Tibial artery (tissue), 4 donors: ENCODE measurements at regions of chr4 and their contacts with region 1.

Region 1: DNA sequence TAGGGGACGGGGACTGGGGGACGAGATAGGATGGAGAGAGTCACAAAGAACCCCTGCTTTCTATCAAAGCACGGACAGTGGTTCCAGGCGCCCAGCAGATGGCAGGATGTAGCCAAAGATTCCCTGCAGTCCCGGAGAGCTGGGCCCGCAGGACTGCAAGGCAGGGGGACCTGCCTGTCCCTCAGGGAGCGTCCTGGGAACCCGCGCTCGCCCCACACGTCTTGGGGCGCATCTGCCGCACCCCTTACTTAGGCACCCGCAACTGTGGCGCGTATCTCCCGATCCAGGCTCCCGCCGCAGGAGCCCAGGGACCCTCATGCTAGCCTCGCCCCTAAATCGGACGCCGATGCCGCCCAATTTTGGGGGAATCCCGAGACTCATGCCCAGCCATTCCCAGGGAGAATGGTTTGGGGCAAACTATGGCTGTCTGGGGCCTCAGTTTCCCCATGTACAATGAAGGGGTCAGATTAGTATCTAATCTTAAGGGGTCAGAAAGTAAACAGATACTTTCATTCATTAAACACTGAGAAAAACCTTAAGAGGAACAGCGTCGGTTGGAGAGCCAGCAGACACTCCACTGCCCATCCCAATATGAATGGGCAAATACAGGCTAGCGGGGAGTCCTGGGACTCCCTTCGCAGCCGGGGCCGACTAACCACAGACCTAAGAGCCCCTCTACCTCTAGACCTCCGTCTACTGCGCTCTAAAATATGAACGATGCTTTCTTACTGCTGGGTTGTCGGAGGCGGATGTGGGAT is 581 bp upstream of the STK32B start:
- DNase-seq: peak; percentile 68 to 77
- H3K4me3 ChIP-seq: peak overlapping the region; percentile 56 to 63
- H3K27ac ChIP-seq: peak overlapping the region; percentile 21 to 44
- H3K4me1 ChIP-seq: peaks cover 0 to 31% (median 20%) of the 10 kb centered on the region in 4 donors
- H3K27me3 ChIP-seq: no peaks in the 10 kb centered on the region
- CTCF ChIP-seq: peak; percentile 58 to 63

Region 2: DNA sequence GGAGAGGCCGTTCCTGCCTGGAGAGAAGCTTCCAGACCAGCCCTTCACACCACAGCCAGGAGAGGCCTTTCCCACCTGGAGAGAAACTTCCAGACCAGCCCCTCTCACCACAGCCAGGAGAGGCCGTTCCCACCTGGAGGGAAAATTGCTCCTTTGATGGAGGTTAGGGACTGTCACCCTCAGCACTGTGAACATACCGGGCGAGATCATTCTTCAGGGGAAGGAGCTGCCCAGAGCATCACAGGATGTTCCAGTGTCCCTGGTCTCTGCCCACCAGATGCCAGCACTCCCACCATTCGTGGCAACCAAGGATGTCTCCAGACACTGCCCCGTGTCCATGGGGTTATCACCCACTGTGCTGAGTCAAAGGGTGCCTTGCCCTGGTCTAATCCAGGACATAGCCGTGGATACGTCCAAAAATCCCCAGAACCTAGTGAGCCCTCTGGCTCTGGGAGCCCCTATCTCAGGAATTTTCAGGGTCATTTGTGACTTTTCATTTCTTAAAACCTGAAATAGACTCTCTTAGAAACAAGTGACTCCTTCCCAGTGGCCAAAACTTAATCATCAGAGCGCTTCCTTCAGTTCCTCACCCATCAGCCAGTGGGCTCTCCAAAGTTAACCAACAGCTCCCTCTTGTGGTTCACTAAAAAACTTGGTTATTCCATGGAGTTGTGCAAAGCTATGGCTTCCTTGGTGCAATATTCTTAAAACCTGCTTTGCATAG is 762.0 kb after region 1 on chr4:
- intact Hi-C with region 1: loop called (anchors 10 kb)
- DNase-seq: peak in 1 of 2 donors; percentile 51
- H3K4me3 ChIP-seq: no peak overlapping the region
- H3K27ac ChIP-seq: no peak overlapping the region
- H3K4me1 ChIP-seq: no peaks in the 10 kb centered on the region
- H3K27me3 ChIP-seq: no peaks in the 10 kb centered on the region
- CTCF ChIP-seq: peak; percentile 66 to 70